CD14-positive monocyte (primary cell): ENCODE measurements at regions of chr18 and their contacts with region 1.

Region 1: DNA sequence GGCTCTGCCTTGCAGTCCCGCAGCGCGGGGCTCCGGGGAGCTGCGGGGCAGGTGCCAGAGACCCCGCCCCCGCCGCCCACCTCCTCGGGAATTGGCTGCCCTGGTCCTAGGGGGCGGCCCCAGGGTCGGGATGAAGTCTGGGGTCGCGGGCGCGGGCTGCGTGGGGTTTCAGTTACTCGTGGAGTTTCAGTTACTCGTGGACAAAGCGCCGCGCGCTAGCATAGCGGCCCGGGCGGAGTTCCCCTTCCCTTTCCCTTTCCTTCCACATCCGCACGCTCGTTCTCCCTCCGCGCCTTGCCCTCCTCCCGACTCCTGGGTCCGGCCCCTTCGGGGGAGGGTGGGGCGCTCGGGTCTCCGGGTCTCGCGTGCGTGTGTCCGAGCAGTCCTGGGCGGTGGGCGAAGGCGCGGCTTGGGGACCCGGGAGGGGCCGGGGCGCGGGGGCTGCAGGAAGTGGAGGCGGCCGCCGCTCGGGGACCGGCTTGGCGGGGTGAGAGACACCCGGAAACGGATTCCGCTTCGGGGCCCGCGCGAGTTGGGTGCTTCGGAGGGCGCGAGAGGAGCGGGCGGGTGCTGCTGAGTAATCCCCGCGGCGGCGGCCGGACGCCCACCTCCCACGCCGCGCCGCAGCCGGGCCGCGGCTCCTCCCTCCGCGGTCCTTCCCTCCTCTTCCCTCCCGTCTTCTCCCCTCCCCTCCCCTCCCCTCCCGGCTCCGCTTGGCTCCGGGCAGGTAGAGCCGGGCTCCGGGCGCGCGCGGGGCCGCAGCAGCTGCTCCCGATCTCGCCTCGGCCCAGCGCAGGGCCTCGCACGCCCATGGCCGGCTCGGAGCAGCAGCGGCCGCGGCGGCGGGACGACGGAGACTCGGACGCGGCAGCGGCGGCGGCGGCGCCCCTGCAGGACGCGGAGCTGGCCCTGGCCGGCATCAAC is at the start of gene TTC39C:
- DNase-seq: peak; percentile 70 to 78 (median 75)
- H3K4me3 ChIP-seq: peak within 1 kb of the TSS; percentile 69 to 88 (median 82)
- H3K4me3 Mint-ChIP-seq: peak within 1 kb of the TSS; percentile 95
- H3K27ac ChIP-seq: peak within 1 kb of the TSS; percentile 81 to 91
- H3K27ac Mint-ChIP-seq: peak within 1 kb of the TSS; percentile 66 to 89 (median 81)
- H3K4me1 ChIP-seq: peaks cover 74 to 78% of the 10 kb centered on the region in 2 donors
- H3K4me1 Mint-ChIP-seq: peaks cover 73% of the 10 kb centered on the region
- H3K27me3 ChIP-seq: no peaks in the 10 kb centered on the region
- H3K27me3 Mint-ChIP-seq: peaks cover 0 to 3% (median 2%) of the 10 kb centered on the region in 3 donors
- CTCF ChIP-seq: no peak
- polyA plus RNA-seq, gene TTC39C: 4.3 to 29.5 (median 8.3) TPM

Region 2: GRCh38 chr18:22567794-22568193 is 1446.5 kb before region 1 on chr18:
- intact Hi-C with region 1: no loop called
- DNase-seq: no peak
- H3K4me3 ChIP-seq: no peak overlapping the region
- H3K4me3 Mint-ChIP-seq: no peak overlapping the region
- H3K27ac ChIP-seq: no peak overlapping the region
- H3K27ac Mint-ChIP-seq: no peak overlapping the region
- H3K4me1 ChIP-seq: no peaks in the 10 kb centered on the region
- H3K4me1 Mint-ChIP-seq: no peaks in the 10 kb centered on the region
- H3K27me3 ChIP-seq: peaks cover 8 to 12% of the 10 kb centered on the region in 2 donors
- H3K27me3 Mint-ChIP-seq: peaks cover 0 to 8% (median 8%) of the 10 kb centered on the region in 3 donors
- CTCF ChIP-seq: no peak

Region 3: GRCh38 chr18:24118750-24119577 is 104.6 kb after region 1 on chr18:
- intact Hi-C with region 1: loop called in 1 of 2 experiments (anchors 10 kb)
- DNase-seq: peak; percentile 55 to 70 (median 70)
- H3K4me3 ChIP-seq: no peak overlapping the region
- H3K4me3 Mint-ChIP-seq: no peak overlapping the region
- H3K27ac ChIP-seq: no peak overlapping the region
- H3K27ac Mint-ChIP-seq: no peak overlapping the region
- H3K4me1 ChIP-seq: peaks cover 5 to 6% of the 10 kb centered on the region in 2 donors
- H3K4me1 Mint-ChIP-seq: peaks cover 9% of the 10 kb centered on the region
- H3K27me3 ChIP-seq: no peaks in the 10 kb centered on the region
- H3K27me3 Mint-ChIP-seq: no peaks in the 10 kb centered on the region
- CTCF ChIP-seq: peak; percentile 93